Heart left ventricle (tissue), 16 donors: ENCODE measurements at regions of chr6 and their contacts with region 1.

Region 1: DNA sequence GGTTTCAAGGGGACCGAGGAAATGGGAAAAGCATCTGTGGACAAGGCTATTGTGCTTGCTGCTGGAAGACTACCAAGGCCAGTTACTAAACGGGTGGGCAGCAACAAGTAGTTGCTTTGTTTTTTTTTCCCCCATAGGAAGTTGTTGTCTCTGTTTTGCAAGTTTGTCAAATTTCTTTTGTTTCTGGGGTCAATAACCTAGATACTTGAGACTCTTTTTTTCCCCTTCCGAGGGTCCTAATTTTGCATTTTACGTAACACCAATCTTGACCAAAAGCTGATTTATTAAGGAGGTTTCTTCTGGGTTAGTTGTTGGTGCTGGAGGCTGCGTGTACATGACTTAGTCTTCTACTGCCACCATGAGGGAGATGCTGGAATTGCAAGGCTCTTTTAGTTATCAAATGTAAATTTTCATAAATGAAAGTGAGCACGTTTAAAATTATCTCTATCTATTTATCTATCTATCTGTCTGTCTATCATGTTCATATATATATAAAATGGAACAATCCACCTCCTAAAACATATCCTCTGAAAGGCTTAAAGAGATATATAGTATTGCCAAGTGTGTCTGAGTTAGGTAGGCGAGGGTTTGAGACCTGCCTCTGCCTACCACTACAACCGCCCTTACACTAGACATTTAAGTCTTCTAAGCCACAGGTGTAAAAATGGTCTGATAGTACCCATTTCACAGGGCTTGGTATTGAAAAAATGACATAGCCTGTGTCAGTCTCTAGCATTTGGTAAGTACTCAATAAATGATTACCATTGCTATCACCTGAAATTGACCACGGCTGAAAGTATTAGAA is 60.2 kb downstream of the GCLC start:
- DNase-seq: peak in 4 of 5 donors; percentile 45 to 68 (median 58)
- ATAC-seq: peak; percentile 73 to 85 (median 78)
- H3K4me3 ChIP-seq: peak overlapping the region in 5 of 12 donors; percentile 1 to 40 (median 32)
- H3K27ac ChIP-seq: peak overlapping the region; percentile 27 to 81 (median 70)
- H3K4me1 ChIP-seq: peaks cover 0 to 29% (median 16%) of the 10 kb centered on the region in 12 donors
- H3K27me3 ChIP-seq: no peaks in the 10 kb centered on the region
- CTCF ChIP-seq: peak; percentile 91 to 99 (median 97)
- POLR2A ChIP-seq: no peak

Region 2: GRCh38 chr6:53171605-53172446 is 312.9 kb before region 1 on chr6:
- intact Hi-C with region 1: loop called (anchors 1 to 2 kb)
- DNase-seq: peak; percentile 83 to 94 (median 87)
- ATAC-seq: peak; percentile 64 to 97 (median 94)
- H3K4me3 ChIP-seq: no peak overlapping the region
- H3K27ac ChIP-seq: no peak overlapping the region
- H3K4me1 ChIP-seq: peaks cover 0 to 11% (median 1%) of the 10 kb centered on the region in 12 donors
- H3K27me3 ChIP-seq: no peaks in the 10 kb centered on the region
- CTCF ChIP-seq: peak; percentile 100
- POLR2A ChIP-seq: no peak

Region 3: GRCh38 chr6:53284901-53285300 is 199.8 kb before region 1 on chr6:
- intact Hi-C with region 1: loop called in 2 of 10 experiments (anchors 10 kb)
- DNase-seq: no peak
- ATAC-seq: no peak
- H3K4me3 ChIP-seq: no peak overlapping the region
- H3K27ac ChIP-seq: no peak overlapping the region
- H3K4me1 ChIP-seq: peaks cover 0 to 47% (median 25%) of the 10 kb centered on the region in 12 donors
- H3K27me3 ChIP-seq: no peaks in the 10 kb centered on the region
- CTCF ChIP-seq: no peak
- POLR2A ChIP-seq: no peak

Region 4: DNA sequence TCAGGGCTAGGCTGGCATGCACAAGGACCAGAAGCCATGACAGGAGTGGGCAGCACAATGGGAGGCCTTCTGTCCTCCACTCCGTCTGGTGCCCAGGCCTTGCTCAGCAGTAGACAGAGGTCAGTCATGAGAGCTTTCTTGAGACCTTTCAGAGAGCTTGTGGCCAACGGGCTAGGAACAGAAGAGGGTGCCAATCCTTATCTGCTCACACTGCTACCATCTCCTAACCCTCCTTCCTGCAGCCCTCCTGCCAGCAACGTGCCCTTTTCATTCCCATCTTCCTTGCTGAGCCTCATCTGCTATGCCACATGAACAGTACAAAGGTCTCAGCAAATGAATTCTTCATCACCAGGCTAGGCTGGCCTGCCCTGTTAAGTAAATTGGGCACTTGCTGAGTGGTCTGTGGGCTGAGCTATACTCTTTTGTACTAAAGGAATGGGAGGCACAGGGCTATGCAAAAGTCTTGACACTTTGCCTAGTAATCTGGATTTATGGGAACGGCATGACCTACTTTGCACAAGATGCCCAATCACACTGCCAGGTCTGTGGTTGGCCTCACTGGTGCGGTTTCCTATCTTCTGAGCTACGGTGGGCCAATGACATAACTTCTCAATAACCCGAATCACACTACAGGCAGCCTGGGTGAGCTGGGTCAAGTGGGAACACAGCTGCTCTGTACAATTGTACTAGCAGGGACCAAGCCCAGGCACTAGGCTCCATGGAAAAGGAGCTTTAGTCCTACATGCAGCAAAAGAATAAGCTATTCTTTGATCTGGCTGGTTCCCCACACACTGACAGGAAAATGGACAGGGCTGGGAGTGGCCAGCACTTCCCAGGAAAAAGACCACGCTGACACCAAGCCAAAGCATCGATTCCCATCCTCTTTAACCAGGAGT is 183.8 kb before region 1 on chr6:
- intact Hi-C with region 1: loop called in 2 of 10 experiments (anchors 5 to 10 kb)
- DNase-seq: peak in 4 of 5 donors; percentile 44 to 54 (median 49)
- ATAC-seq: peak; percentile 81 to 92 (median 89)
- H3K4me3 ChIP-seq: no peak overlapping the region
- H3K27ac ChIP-seq: peak overlapping the region; percentile 43 to 88 (median 77)
- H3K4me1 ChIP-seq: peaks cover 19 to 80% (median 66%) of the 10 kb centered on the region in 12 donors
- H3K27me3 ChIP-seq: no peaks in the 10 kb centered on the region
- CTCF ChIP-seq: no peak
- POLR2A ChIP-seq: no peak

Region 5: DNA sequence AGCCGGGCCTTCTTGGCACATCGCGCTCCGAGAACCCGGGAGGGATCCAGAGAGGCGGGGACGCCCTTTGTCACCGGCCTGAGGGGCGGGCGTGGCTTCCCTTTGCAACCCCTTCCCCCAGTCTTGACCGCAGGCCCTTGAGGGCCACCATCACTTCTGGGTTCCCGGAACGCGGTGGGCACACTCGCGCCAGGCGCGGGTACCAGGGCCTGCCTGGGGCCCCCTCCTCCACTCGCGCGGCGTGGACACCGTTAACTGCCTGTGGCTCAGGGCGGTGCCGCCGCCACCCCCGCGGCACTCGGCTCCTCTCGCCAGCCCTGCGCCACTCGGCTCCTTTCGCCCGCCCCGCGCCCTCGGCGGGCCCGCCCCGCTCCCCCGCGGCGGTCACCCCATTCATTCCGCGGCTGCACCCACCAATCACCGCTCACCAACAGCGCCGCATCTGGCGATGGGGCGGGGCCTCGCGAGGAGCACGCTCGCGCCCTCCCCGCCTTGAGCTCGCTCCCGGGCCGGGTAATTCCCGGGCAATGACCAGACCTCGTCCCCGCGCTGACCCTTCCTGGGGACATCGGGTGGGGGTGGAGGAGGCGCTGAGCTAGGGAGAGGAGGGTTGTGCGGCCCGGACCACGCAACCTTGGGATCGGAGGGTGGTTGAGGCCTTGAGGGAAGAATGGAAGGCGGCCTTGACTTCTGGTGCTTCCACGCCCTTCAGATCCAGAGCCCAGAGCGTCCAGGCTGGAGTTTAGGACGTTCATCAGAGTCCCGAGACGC is 125.4 kb before region 1 on chr6:
- intact Hi-C with region 1: loop called in 3 of 10 experiments (anchors 5 to 10 kb)
- DNase-seq: peak; percentile 97 to 98 (median 97)
- ATAC-seq: peak; percentile 96 to 98 (median 98)
- H3K4me3 ChIP-seq: peak overlapping the region; percentile 49 to 78 (median 70)
- H3K27ac ChIP-seq: peak overlapping the region; percentile 90 to 97 (median 94)
- H3K4me1 ChIP-seq: peaks cover 0 to 29% (median 10%) of the 10 kb centered on the region in 12 donors
- H3K27me3 ChIP-seq: no peaks in the 10 kb centered on the region
- CTCF ChIP-seq: peak in 1 of 12 donors; percentile 22
- POLR2A ChIP-seq: peak; percentile 60 to 84

Region 6: DNA sequence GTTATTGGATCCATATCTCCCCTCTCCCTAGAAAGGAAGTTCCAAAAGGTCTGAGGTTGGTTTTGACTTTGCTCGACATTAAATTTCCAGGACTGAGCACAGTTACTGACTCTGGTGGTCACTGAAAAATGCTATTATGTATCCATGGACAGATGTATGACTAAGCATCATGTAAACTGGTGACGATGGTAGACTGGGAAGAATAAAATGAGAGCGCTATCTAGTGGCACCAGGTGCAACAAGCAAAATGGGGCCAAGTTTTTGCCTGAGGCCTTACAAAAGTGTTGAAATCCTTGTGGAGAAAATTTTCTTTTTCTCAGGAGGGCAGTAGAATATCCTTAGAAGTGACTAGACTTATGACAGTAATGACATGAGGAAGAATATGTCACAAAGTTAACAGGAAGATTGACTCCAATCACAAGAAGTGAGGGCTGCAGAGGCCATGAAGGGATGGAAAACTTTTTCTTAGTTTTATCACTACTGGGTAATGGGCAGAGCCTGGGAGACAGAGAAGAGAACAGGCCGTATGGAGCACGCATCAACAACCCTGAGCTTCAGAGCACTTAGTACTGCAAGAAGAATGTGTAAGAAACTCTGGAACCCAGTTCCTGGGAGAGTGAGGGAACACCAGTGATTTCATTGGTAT is 47.0 kb before region 1 on chr6:
- intact Hi-C with region 1: loop called in 4 of 10 experiments (anchors 1 to 5 kb)
- DNase-seq: no peak
- ATAC-seq: peak; percentile 49 to 73 (median 58)
- H3K4me3 ChIP-seq: no peak overlapping the region
- H3K27ac ChIP-seq: no peak overlapping the region
- H3K4me1 ChIP-seq: peaks cover 0 to 32% (median 17%) of the 10 kb centered on the region in 12 donors
- H3K27me3 ChIP-seq: no peaks in the 10 kb centered on the region
- CTCF ChIP-seq: peak; percentile 16 to 63 (median 49)
- POLR2A ChIP-seq: no peak

Region 7: GRCh38 chr6:53967415-53967814 is 482.7 kb after region 1 on chr6:
- intact Hi-C with region 1: no loop called
- DNase-seq: no peak
- ATAC-seq: no peak
- H3K4me3 ChIP-seq: no peak overlapping the region
- H3K27ac ChIP-seq: no peak overlapping the region
- H3K4me1 ChIP-seq: peaks cover 0 to 8% (median 0%) of the 10 kb centered on the region in 12 donors
- H3K27me3 ChIP-seq: no peaks in the 10 kb centered on the region
- CTCF ChIP-seq: no peak
- POLR2A ChIP-seq: no peak